ENCODE measurements at regions of chr10 and their contacts with region 1.

Region 1: GRCh38 chr10:103685880-103686669 is 169.3 kb downstream of the SH3PXD2A start:
- DNase-seq: peak; percentile 80
- ATAC-seq: peak; percentile 78 to 81

Region 2: GRCh38 chr10:103512196-103512990 is 173.7 kb before region 1 on chr10:
- intact Hi-C with region 1: no loop called
- DNase-seq: no peak
- ATAC-seq: no peak

Region 3: GRCh38 chr10:103605359-103606095 is 80.5 kb before region 1 on chr10:
- intact Hi-C with region 1: loop called (anchors 2 to 5 kb)
- DNase-seq: peak; percentile 51
- ATAC-seq: peak; percentile 51 to 71